Aorta (tissue), 5 donors: ENCODE measurements at regions of chr3 and their contacts with region 1.

Region 1: GRCh38 chr3:7779331-7779730 is 722.3 kb upstream of the LMCD1 start:
- DNase-seq: no peak
- ATAC-seq: no peak
- H3K4me3 ChIP-seq: no peak overlapping the region
- H3K27ac ChIP-seq: no peak overlapping the region
- H3K4me1 ChIP-seq: no peaks in the 10 kb centered on the region
- H3K27me3 ChIP-seq: no peaks in the 10 kb centered on the region

Region 2: DNA sequence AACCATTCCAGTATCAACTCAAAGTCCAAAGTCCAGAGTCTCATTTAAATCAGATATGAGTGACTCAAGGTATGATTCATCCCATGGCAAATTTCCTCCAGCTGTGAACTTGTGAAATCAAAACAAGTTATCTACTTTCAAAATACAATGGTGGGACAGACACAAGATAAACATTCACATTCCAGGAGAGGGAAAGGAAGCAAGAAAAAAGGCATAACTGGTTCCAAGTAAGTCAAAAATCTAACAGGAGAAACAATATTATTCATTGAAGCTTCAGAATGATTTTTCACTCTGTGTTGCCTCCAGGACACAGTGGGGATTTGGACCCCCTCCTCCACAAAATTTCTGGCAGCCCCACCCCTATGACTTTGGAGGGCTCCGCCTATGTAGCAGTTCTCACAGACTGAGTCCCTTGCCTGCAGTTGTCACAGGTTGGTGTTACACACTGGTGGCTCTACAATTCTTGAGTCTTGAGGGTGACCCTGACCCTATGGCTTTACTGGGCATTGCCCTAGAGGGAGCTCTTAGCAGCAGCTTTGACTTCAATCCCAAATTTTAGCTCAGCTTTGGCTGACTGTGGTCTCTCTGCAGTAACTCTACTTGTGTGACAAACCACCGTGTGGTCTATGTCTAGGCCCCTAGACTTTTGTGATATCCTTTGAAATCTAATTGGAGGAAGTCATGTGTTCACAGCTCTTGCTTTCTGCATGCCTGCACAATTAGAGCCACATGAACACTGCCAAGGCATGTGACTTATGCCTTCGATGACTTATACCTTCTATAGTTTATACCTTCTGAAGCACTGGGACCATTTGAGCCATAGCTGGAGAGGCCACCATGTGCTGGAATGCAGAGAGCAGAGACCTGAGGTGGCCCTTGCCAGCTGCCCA is 274.2 kb before region 1 on chr3:
- intact Hi-C with region 1: loop called in 1 of 2 experiments (anchors 10 kb)
- DNase-seq: peak in 1 of 2 donors; percentile 59
- ATAC-seq: peak; percentile 69
- H3K4me3 ChIP-seq: no peak overlapping the region
- H3K27ac ChIP-seq: peak overlapping the region; percentile 33 to 35
- H3K4me1 ChIP-seq: peaks cover 2 to 15% of the 10 kb centered on the region in 2 donors
- H3K27me3 ChIP-seq: no peaks in the 10 kb centered on the region

Region 3: GRCh38 chr3:7651274-7651673 is 128.1 kb before region 1 on chr3:
- intact Hi-C with region 1: no loop called
- DNase-seq: no peak
- ATAC-seq: no peak
- H3K4me3 ChIP-seq: no peak overlapping the region
- H3K27ac ChIP-seq: no peak overlapping the region
- H3K4me1 ChIP-seq: peaks cover 0 to 7% of the 10 kb centered on the region in 2 donors
- H3K27me3 ChIP-seq: no peaks in the 10 kb centered on the region